Naive thymus-derived CD4-positive, alpha-beta T cell (primary cell): ENCODE measurements at regions of chr10 and their contacts with region 1.

Region 1: DNA sequence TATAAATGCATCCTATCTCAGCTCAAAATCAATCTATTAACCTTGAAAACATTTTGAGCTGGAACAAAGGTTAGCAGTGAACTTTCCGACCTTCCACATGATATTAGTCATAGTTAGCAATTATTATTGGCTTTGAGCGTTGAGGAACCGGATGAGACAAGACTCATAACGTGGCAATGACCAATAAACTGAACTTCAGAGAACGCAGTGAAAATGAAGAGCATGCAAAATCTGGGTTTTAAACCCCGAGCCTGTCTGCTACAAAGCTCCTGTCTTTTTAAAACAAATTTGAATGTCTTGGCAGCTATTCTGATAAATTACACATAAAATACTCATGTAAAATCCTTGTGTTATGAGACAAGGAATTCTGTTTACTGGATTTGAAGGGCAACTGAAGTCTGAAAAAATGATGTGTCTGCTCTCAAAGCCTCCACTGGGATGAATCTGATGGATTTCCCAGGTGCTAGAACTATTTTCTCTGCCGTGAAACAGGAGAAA is 74.7 kb upstream of the ITGB1 start:
- DNase-seq: no peak
- ATAC-seq: no peak
- H3K4me3 ChIP-seq: no peak overlapping the region
- H3K4me3 Mint-ChIP-seq: no peak overlapping the region
- H3K27ac ChIP-seq: no peak overlapping the region
- H3K27ac Mint-ChIP-seq: no peak overlapping the region
- H3K4me1 ChIP-seq: peaks cover 11 to 20% of the 10 kb centered on the region in 2 donors
- H3K4me1 Mint-ChIP-seq: peaks cover 6 to 26% (median 20%) of the 10 kb centered on the region in 7 donors
- H3K27me3 ChIP-seq: no peaks in the 10 kb centered on the region
- H3K27me3 Mint-ChIP-seq: peaks cover 0 to 6% (median 0%) of the 10 kb centered on the region in 5 donors

Region 2: DNA sequence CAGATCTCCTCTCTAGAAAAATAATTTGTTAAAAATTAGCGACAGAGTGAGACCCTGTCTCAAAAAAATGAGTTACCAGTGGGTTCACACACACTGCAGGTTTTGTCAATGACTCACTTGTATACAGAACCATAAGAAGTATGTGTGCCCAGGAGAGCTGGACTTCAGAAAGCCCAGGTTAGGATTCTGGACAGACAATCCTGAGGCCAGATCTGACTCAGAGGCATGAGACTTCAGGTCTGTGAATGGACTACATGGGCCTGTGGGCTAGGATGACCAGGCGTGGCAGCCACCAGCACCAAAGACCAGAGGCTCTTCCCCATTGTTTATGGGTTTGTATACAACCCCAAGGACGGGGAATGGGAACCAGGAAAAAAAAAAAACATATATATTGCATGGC is 1991.7 kb before region 1 on chr10:
- CTCF ChIA-PET with region 1: no interaction called
- POLR2A ChIA-PET with region 1: no interaction called
- intact Hi-C with region 1: loop called in 1 of 2 experiments (anchors 5 kb)
- DNase-seq: no peak
- ATAC-seq: no peak
- H3K4me3 ChIP-seq: no peak overlapping the region
- H3K4me3 Mint-ChIP-seq: no peak overlapping the region
- H3K27ac ChIP-seq: no peak overlapping the region
- H3K27ac Mint-ChIP-seq: no peak overlapping the region
- H3K4me1 ChIP-seq: no peaks in the 10 kb centered on the region
- H3K4me1 Mint-ChIP-seq: peaks cover 0 to 13% (median 3%) of the 10 kb centered on the region in 7 donors
- H3K27me3 ChIP-seq: no peaks in the 10 kb centered on the region
- H3K27me3 Mint-ChIP-seq: peaks cover 0 to 1% (median 0%) of the 10 kb centered on the region in 5 donors